H1 (cell line): ENCODE measurements at regions of chr20 and their contacts with region 1.

Region 1: DNA sequence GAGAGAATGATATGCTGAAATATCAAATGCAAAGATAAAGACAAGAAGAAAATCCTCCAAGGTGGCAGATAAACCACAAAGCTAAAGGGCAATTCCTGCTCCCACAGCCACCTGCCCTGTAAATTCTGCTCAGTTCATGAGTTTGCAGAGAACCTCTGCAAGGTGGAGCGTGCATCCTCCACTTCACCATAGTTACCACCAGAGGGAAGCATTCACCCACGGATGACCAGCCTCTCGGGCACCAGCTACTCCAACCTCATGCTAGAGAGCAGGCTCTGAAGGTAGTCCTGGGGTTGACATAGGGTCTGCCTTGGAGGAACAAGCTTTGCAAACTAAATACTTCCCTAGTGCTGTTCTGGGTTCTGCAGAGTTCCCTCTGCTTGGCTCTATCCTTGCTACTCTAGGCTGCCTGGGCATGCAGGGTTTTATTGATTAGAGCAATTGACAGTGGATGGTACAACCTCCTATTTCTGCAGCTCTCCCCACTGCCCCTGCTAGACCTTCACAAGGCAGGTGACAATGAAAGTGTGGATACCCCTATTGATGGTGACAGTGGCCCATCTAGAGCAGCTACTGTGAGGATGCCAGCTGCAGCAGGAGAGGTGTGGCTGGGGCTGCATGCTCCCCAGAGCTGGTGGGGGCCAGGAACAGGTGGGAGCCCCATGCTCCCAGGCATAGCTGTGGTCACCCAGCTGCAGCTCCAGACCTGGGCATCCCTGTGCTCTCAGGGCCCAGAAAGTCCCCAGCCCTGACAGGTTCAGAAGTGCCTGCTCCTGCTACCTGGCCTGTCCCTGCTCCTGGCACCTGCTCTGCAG is 51.1 kb downstream of the GGTLC1 start:
- DNase-seq: peak; percentile 41 to 66
- H3K4me3 ChIP-seq: no peak overlapping the region
- H3K27ac ChIP-seq: no peak overlapping the region
- H3K4me1 ChIP-seq: no peaks in the 10 kb centered on the region
- H3K27me3 ChIP-seq: no peaks in the 10 kb centered on the region
- CTCF ChIP-seq: peak; percentile 78 to 92 (median 91)
- EP300 ChIP-seq: no peak
- POLR2A ChIP-seq: no peak
- RAD21 ChIP-seq: peak; percentile 98 to 99

Region 2: DNA sequence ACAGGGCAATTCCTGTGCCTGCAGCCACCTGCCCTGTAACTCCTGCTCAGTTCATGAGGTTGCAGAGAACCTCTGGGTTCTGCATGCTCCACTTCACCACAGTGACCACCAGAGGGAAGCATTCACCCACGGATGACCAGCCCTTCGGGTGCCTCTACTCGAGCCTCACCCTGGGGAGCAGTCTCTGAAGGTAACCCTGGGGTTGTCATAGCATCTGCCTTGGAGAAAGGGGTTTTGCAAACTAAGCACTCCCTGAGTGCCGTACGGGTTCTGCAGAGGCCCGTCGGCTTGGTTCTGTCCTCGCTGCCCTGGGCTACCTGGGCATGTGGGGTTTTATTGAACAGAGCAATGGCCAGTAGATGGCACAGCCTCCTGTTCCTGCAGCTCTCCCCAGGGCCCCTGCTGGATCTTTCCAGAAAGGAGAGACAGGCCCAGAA is 47.7 kb before region 1 on chr20:
- CTCF ChIA-PET with region 1: interaction called, 14 read pairs
- POLR2A ChIA-PET with region 1: no interaction called
- DNase-seq: peak in 1 of 2 experiments; percentile 85
- H3K4me3 ChIP-seq: no peak overlapping the region
- H3K27ac ChIP-seq: no peak overlapping the region
- H3K4me1 ChIP-seq: no peaks in the 10 kb centered on the region
- H3K27me3 ChIP-seq: no peaks in the 10 kb centered on the region
- CTCF ChIP-seq: peak; percentile 84 to 91 (median 87)
- EP300 ChIP-seq: no peak
- POLR2A ChIP-seq: no peak
- RAD21 ChIP-seq: peak; percentile 91 to 94

Region 3: GRCh38 chr20:23954008-23954745 is 16.7 kb after region 1 on chr20:
- CTCF ChIA-PET with region 1: interaction called, 11 read pairs
- POLR2A ChIA-PET with region 1: no interaction called
- DNase-seq: no peak
- H3K4me3 ChIP-seq: no peak overlapping the region
- H3K27ac ChIP-seq: no peak overlapping the region
- H3K4me1 ChIP-seq: peaks cover 0 to 4% (median 2%) of the 10 kb centered on the region in 4 experiments; a peak in 3 of 7 replicates
- H3K27me3 ChIP-seq: no peaks in the 10 kb centered on the region; a peak in 1 of 7 replicates
- CTCF ChIP-seq: no peak
- EP300 ChIP-seq: no peak
- POLR2A ChIP-seq: no peak
- RAD21 ChIP-seq: no peak

Region 4: DNA sequence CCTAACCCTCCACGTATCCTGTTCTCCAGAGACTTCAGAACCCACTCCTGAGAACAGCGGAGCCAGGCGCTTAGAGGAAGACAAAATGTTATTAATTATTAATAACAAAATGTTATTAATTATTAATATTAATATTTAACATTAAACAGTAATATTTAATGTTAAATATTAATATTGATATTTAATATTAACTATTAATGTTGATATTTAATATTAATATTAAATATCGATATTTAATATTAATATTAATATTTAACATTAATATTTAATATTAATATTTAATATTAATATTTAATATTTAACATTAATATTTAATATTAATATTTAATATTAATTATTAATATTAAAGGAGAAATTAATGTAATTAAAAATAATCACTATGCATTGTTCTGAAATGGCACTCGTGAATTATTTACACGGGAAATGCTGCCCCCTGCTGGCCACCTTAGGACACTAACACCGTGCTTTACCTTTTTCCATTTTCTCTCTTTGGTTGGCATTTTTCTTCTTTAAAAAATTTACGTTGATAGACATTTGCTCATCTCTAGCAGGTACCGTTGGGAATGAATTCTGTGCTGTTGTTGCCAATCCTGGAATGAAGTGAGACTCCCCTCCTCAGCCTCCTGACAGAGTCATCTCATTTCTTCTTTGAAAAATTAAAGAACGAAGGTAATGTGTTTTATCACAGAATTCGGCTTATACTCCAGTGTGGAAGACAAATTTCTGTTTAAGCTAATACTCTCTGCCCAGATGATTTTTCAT is 58.6 kb after region 1 on chr20:
- CTCF ChIA-PET with region 1: interaction called, 18 read pairs
- POLR2A ChIA-PET with region 1: no interaction called
- DNase-seq: peak in 1 of 2 experiments; percentile 3
- H3K4me3 ChIP-seq: no peak overlapping the region
- H3K27ac ChIP-seq: no peak overlapping the region
- H3K4me1 ChIP-seq: no peaks in the 10 kb centered on the region
- H3K27me3 ChIP-seq: no peaks in the 10 kb centered on the region
- CTCF ChIP-seq: peak in 2 of 3 experiments; percentile 40 to 46; a peak in 3 of 4 replicates
- EP300 ChIP-seq: no peak
- POLR2A ChIP-seq: no peak
- RAD21 ChIP-seq: peak; percentile 56 to 57

Region 5: DNA sequence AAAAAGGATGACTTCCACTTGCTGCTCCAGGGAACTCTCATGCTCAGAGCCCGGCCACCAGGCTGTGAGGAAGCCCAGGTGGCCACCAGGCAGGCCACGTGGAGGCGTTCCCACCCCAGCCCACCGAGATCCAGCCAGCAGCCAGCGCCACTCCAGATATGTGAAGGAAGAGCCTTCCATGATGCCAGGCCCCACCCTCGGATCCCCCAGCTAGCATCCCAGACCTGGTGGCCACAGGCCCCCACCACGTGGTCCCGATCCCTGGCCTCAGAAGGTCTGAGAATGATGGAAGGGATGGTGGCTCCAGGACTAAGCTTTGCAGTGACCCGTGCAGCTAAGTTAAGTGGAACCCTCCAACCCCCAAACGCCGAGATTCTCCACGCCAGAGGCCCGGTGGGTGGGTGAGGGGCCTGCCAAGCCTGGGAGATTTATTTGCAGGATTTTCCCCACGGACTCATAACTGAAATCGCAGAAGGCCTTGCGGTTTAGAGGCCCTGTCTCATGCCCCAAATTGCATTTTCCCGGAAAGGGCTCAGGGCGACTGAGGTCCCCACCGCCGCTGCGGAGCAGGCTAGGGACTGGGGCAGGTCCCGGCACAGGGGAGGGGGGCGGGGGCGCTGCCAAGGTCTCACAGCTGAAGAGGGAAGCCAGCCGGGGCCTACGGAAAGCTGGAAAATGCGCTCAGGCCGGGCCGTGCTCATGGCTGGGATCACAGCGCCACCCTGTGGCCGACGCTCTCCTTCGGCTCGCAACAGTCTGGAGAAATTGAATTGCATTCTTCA is 980.5 kb after region 1 on chr20:
- CTCF ChIA-PET with region 1: interaction called, 15 read pairs
- POLR2A ChIA-PET with region 1: no interaction called
- DNase-seq: peak; percentile 67 to 88
- H3K4me3 ChIP-seq: no peak overlapping the region
- H3K27ac ChIP-seq: no peak overlapping the region
- H3K4me1 ChIP-seq: no peaks in the 10 kb centered on the region
- H3K27me3 ChIP-seq: no peaks in the 10 kb centered on the region; a peak in 1 of 7 replicates
- CTCF ChIP-seq: peak; percentile 84 to 91 (median 89)
- EP300 ChIP-seq: no peak
- POLR2A ChIP-seq: no peak
- RAD21 ChIP-seq: peak; percentile 96 to 97